Calu3 (cell line): ENCODE measurements at regions of chr5 and their contacts with region 1.

Region 1: DNA sequence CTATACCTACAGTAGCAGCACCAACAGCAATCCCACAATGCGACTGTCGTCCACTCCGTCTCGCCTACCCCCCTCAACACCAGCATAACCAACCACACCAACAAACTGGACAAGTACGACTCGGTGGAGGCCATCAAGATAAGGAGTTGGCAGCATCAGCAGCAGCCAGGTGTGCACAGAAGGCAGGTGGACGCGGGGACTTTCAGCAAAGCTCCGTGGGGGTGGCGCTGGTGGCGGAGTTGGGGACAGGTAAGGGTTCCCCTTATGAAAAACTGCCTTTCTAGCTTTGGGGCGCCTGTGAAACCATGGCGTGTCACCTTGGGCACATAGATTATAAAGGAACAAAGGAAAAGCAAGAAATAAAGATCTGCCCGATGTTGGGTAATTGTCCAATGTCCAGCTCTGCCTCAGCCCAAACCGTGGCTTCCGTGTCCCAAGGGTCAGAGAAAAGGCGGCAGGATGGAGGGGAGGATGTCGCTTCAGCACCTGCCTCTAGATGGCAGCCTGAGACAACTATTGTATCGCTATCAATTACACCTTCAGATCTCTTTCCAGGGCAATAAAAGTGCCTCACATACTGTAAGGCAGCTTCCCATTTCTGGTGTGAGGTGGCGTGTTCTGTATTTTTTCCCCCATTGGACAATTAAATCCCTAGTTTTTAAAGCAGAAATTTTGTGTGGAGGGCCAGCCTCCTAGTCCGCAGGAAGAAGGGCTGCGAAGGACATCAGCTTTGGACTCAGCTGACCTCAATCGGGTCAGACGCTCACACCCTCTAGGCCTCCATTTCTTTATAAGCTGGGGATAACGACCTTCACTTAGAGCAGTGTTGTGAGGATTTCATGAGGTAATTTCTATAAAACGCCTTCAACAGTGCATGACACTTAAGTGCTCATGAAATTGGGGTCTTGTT is 58.8 kb downstream of the MTRR start:
- DNase-seq: peak; percentile 70
- H3K4me3 Mint-ChIP-seq: no peak overlapping the region
- H3K27ac Mint-ChIP-seq: no peak overlapping the region
- H3K4me1 Mint-ChIP-seq: no peaks in the 10 kb centered on the region
- H3K27me3 Mint-ChIP-seq: no peaks in the 10 kb centered on the region
- CTCF ChIP-seq: peak; percentile 78

Region 2: GRCh38 chr5:7529880-7530279 is 397.8 kb before region 1 on chr5:
- CTCF ChIA-PET with region 1: no interaction called
- intact Hi-C with region 1: no loop called
- DNase-seq: no peak
- H3K4me3 Mint-ChIP-seq: no peak overlapping the region
- H3K27ac Mint-ChIP-seq: no peak overlapping the region
- H3K4me1 Mint-ChIP-seq: no peaks in the 10 kb centered on the region
- H3K27me3 Mint-ChIP-seq: no peaks in the 10 kb centered on the region
- CTCF ChIP-seq: no peak

Region 3: DNA sequence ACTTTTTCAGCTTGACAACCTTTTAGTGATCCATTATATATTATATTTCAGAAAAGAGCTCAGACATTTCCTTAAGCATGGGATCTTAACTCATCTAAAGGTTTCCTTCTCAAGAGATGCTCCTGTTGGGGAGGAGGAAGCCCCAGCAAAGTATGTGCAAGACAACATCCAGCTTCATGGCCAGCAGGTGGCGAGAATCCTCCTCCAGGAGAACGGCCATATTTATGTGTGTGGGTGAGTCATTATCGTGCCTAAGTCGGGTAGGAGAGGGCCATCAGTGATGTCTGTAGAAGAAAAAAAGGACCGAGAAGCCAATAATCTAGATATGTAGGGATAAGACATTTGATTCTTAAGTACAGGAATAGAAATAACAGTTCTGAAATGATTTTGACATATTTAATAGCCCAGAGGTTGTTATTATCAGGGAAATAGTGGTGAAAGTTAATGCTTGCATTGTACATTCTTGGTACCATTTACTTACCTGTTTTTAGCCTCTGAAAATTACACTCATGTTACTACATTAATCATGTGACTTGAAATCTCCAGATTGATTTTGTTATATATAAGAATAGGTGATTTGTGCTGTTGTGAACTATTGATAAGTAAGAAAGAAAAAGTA is 30.6 kb before region 1 on chr5:
- CTCF ChIA-PET with region 1: no interaction called
- intact Hi-C with region 1: loop called (anchors 1 kb)
- DNase-seq: peak; percentile 56
- H3K4me3 Mint-ChIP-seq: no peak overlapping the region
- H3K27ac Mint-ChIP-seq: no peak overlapping the region
- H3K4me1 Mint-ChIP-seq: no peaks in the 10 kb centered on the region
- H3K27me3 Mint-ChIP-seq: no peaks in the 10 kb centered on the region
- CTCF ChIP-seq: peak; percentile 41

Region 4: DNA sequence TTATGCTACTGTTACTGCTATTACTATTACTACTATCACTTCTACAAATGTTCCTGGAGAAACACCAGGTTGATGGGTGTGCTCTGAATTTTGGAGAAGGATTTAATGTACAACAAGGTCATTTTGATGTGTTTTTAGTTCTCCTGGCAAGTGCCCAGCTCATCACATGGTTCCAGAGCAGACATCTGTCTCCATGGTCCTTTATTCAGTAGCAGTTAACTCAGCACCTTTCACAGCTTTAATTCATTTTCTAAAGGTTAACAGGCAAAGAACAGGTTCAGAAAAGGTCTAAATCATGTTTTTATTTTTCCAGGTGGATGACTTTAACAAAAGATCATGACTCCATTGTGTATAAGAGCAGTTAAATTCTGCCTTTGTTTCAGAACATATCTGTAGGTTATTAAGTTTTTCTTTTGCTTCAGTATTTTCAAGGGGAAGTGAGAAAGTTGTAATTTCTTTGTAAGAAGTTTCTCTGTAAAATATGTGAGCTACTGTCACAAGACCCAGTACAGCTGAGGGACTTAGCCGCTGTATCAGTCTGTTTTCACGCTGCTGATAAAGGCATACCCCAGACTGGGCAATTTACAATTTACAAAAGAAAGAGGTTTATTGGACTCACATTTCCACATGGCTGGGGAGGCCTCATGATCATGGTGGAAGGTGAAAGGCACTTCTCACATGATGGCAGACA is 16.8 kb before region 1 on chr5:
- CTCF ChIA-PET with region 1: no interaction called
- intact Hi-C with region 1: no loop called
- DNase-seq: no peak
- H3K4me3 Mint-ChIP-seq: no peak overlapping the region
- H3K27ac Mint-ChIP-seq: no peak overlapping the region
- H3K4me1 Mint-ChIP-seq: no peaks in the 10 kb centered on the region
- H3K27me3 Mint-ChIP-seq: no peaks in the 10 kb centered on the region
- CTCF ChIP-seq: no peak

Region 5: DNA sequence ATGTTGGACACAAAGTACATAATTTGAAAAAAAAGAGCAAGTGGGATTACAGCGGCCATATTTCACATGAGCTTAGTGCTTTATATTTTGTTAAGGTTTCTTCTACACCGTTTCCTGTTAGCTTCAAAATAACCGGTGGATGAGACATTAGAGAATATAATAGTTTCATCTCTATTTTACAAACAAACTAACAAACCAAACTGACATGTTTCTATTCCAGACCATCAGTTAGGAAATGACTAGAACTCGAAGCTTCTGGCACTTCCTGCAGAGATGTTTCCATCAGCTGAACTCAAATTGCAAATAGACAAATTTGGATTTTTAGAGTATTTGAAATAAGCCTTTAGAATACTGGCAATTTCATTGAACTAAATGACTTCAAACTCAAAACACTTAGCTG is 27.8 kb after region 1 on chr5:
- CTCF ChIA-PET with region 1: no interaction called
- intact Hi-C with region 1: no loop called
- DNase-seq: no peak
- H3K4me3 Mint-ChIP-seq: no peak overlapping the region
- H3K27ac Mint-ChIP-seq: no peak overlapping the region
- H3K4me1 Mint-ChIP-seq: no peaks in the 10 kb centered on the region
- H3K27me3 Mint-ChIP-seq: no peaks in the 10 kb centered on the region
- CTCF ChIP-seq: no peak

Region 6: GRCh38 chr5:8184455-8185063 is 256.8 kb after region 1 on chr5:
- CTCF ChIA-PET with region 1: no interaction called
- intact Hi-C with region 1: loop called (anchors 5 kb)
- DNase-seq: peak; percentile 49
- H3K4me3 Mint-ChIP-seq: no peak overlapping the region
- H3K27ac Mint-ChIP-seq: no peak overlapping the region
- H3K4me1 Mint-ChIP-seq: no peaks in the 10 kb centered on the region
- H3K27me3 Mint-ChIP-seq: no peaks in the 10 kb centered on the region
- CTCF ChIP-seq: peak; percentile 52

Region 7: GRCh38 chr5:8756498-8757084 is 828.9 kb after region 1 on chr5:
- CTCF ChIA-PET with region 1: no interaction called
- intact Hi-C with region 1: loop called (anchors 10 kb)
- DNase-seq: peak; percentile 9
- H3K4me3 Mint-ChIP-seq: no peak overlapping the region
- H3K27ac Mint-ChIP-seq: no peak overlapping the region
- H3K4me1 Mint-ChIP-seq: no peaks in the 10 kb centered on the region
- H3K27me3 Mint-ChIP-seq: no peaks in the 10 kb centered on the region
- CTCF ChIP-seq: no peak

Region 8: GRCh38 chr5:8842971-8843551 is 915.3 kb after region 1 on chr5:
- CTCF ChIA-PET with region 1: no interaction called
- intact Hi-C with region 1: loop called (anchors 5 kb)
- DNase-seq: peak; percentile 6
- H3K4me3 Mint-ChIP-seq: no peak overlapping the region
- H3K27ac Mint-ChIP-seq: no peak overlapping the region
- H3K4me1 Mint-ChIP-seq: no peaks in the 10 kb centered on the region
- H3K27me3 Mint-ChIP-seq: no peaks in the 10 kb centered on the region
- CTCF ChIP-seq: no peak

Region 9: DNA sequence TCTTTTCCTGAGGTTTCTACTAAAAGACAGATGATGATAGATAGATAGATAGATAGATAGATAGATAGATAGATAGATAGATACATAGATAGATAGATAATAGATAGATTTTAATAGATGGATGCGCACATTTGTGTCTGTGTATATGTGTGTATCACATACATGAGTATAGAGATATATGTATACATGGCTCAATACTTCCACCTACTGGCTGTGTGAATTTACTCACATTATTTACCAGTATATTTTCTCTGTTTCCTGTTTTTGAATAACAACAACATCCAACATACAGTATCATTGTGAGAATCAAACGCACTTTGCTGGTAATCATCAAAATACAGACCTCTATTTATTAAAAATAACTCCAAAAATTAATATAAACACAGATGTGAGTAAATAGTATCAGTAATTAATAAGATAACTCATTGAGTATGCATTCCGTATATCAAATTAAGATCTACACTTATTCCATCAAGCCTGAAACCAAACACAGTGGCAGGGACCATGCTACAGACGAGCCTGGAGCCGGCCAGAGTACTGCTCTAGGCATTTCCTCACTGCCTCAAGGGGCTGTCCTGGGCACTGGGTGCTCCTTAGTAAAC is 1280.2 kb after region 1 on chr5:
- CTCF ChIA-PET with region 1: no interaction called
- intact Hi-C with region 1: loop called (anchors 5 kb)
- DNase-seq: no peak
- H3K4me3 Mint-ChIP-seq: no peak overlapping the region
- H3K27ac Mint-ChIP-seq: no peak overlapping the region
- H3K4me1 Mint-ChIP-seq: no peaks in the 10 kb centered on the region
- H3K27me3 Mint-ChIP-seq: no peaks in the 10 kb centered on the region
- CTCF ChIP-seq: no peak